Panc1 (cell line): ENCODE measurements at regions of chr1 and their contacts with region 1.

Region 1: DNA sequence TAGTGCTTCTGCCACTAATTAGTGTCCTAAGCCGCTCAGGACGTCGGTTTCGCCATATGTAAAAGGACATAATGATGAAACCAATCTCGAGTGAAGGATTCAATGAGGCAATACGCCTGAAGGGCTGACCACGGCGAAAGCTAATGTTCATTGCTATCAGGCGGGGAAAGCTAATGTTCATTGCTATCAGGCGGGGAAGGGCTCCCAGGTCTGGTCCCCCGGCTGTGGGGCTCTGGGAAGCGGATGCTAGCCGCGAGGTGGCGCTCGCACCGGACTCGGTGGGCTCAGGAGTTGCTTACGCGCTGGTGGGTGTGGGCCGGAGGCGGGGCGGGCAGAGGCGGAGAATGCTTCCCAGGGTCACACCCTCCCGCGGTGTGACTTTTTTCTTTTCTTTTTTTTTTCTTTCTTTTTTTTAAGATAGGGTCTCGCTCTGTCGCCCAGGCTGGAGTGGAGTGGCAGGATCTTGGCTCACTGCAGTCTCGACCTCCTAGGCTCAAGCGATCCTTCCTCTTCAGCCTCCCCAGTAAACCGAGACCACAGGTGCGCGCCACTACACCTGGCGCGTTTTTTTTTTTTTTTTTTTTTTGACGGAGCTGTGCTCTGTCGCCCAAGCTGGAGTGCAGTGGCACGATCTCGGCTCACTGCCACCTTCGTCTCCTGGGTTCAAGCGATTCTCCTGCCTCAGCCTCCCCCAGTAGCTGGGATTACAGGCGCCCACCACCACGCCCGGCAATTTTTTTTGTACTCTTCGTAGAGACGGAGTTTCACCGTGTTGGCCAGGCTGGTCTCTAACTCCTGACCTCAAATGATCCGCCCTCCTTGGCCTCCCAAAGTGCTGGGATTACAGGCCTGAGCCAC is 1.1 kb upstream of the PEAR1 start:
- DNase-seq: no peak
- ATAC-seq: peak; percentile 83
- H3K4me3 ChIP-seq: peak overlapping the region; percentile 31 to 62
- H3K27ac ChIP-seq: peak overlapping the region; percentile 56; the same call in 1 of the 2 replicates
- H3K4me1 ChIP-seq: peaks cover 42% of the 10 kb centered on the region
- H3K27me3 ChIP-seq: no peaks in the 10 kb centered on the region
- CTCF ChIP-seq: peak; percentile 95

Region 2: DNA sequence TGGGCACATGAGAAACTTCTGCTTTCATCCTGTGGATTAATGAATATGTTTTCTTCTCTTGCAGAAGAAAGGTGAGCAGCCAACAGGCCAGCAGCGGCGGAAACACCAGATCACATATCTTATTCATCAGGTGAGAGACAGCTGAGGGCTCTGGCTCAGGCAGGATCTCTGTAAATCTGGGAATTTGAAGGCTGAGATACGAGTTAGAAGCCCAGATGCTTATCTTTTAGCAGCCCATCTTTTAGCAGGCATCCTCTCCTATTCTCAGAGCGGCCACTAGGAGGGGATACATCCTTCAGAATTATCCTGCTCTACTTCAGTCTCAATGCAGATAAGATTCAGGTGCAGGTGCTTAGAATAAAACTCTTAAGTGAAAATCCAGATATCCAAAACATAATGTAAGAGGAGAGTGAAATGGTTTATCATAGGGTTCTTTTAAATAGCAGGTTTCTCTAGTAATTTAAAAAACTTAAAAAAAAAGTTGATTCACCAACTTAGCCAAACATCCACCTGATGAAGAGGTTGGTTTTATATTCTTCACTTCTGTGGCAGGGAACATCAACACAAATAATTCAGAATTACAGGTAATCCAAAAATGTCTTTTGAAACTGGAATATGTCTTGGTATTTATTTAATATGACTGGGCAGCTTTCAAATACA is 95.1 kb before region 1 on chr1:
- CTCF ChIA-PET with region 1: interaction called, 4 read pairs
- POLR2A ChIA-PET with region 1: no interaction called
- in situ Hi-C with region 1: no loop called
- intact Hi-C with region 1: loop called (anchors 1 kb)
- DNase-seq: peak; percentile 45
- ATAC-seq: peak; percentile 83
- H3K4me3 ChIP-seq: no peak overlapping the region
- H3K27ac ChIP-seq: no peak overlapping the region
- H3K4me1 ChIP-seq: no peaks in the 10 kb centered on the region
- H3K27me3 ChIP-seq: no peaks in the 10 kb centered on the region
- CTCF ChIP-seq: peak; percentile 86

Region 3: GRCh38 chr1:156838981-156839410 is 53.4 kb before region 1 on chr1:
- CTCF ChIA-PET with region 1: interaction called, 15 read pairs
- POLR2A ChIA-PET with region 1: interaction called, 3 read pairs
- in situ Hi-C with region 1: no loop called
- intact Hi-C with region 1: no loop called
- DNase-seq: peak; percentile 27
- ATAC-seq: peak; percentile 79
- H3K4me3 ChIP-seq: no peak overlapping the region
- H3K27ac ChIP-seq: no peak overlapping the region
- H3K4me1 ChIP-seq: no peaks in the 10 kb centered on the region
- H3K27me3 ChIP-seq: peaks cover 2% of the 10 kb centered on the region
- CTCF ChIP-seq: peak; percentile 96

Region 4: GRCh38 chr1:156920233-156921052 is 28.0 kb after region 1 on chr1 and contains the start of gene LRRC71:
- CTCF ChIA-PET with region 1: interaction called, 8 read pairs
- POLR2A ChIA-PET with region 1: no interaction called
- in situ Hi-C with region 1: no loop called
- intact Hi-C with region 1: loop called (anchors 1 kb)
- DNase-seq: no peak
- ATAC-seq: peak; percentile 98
- H3K4me3 ChIP-seq: peak within 1 kb of the TSS; percentile 28 to 47
- H3K27ac ChIP-seq: 0 out of 2 replicates have a peak within 1 kb of the TSS, but pooled peaks have one; percentile 20
- H3K4me1 ChIP-seq: peaks cover 3% of the 10 kb centered on the region; the same call in 1 of the 2 replicates
- H3K27me3 ChIP-seq: no peaks in the 10 kb centered on the region
- CTCF ChIP-seq: peak; percentile 98
- total RNA-seq, gene LRRC71: 0.77 TPM

Region 5: DNA sequence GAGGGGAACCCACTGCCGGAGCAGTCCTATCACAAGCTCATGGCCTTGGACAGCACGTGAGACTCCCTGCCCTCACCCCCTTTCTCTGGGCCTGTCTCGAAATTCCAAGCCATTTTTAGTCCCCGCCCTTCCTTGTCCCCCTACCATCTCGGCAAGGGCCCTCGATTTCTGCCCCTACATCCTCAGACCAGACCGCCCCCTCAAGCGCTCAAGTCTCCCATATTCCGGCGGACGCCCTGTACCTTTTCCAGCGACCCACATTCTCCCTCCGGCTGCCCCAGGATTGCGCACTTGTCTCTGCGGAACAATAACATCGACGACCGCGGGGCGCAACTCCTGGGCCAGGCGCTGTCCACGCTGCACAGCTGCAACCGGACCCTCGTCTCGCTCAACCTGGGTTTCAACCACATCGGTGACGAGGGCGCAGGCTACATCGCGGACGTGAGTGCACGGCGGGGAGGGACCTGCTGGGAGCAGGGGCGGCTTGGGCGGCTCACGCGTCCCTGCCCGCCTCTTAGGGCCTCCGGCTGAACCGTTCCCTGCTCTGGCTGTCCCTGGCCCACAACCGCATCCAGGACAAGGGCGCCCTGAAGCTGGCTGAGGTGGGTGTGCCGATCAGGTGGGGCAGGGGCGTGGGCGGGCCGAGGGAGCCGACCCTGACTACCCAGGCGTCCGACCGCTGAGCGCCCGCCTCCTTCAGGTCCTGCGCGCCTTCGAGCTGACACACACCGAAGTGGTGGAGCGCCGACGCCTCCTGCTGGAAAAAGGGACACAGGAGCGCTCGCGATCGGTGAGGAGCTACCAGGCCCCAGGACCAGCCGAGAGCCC is 35.0 kb after region 1 on chr1:
- CTCF ChIA-PET with region 1: interaction called, 11 read pairs
- POLR2A ChIA-PET with region 1: no interaction called
- in situ Hi-C with region 1: no loop called
- intact Hi-C with region 1: no loop called
- DNase-seq: peak; percentile 39
- ATAC-seq: peak; percentile 93
- H3K4me3 ChIP-seq: peak overlapping the region; percentile 50 to 60
- H3K27ac ChIP-seq: peak overlapping the region; percentile 44; the same call in 1 of the 2 replicates
- H3K4me1 ChIP-seq: peaks cover 3% of the 10 kb centered on the region; the same call in 1 of the 2 replicates
- H3K27me3 ChIP-seq: no peaks in the 10 kb centered on the region
- CTCF ChIP-seq: peak; percentile 97

Region 6: GRCh38 chr1:157916887-157917570 is 1024.6 kb after region 1 on chr1:
- CTCF ChIA-PET with region 1: no interaction called
- POLR2A ChIA-PET with region 1: no interaction called
- in situ Hi-C with region 1: no loop called
- intact Hi-C with region 1: no loop called
- DNase-seq: no peak
- ATAC-seq: no peak
- H3K4me3 ChIP-seq: no peak overlapping the region
- H3K27ac ChIP-seq: no peak overlapping the region
- H3K4me1 ChIP-seq: no peaks in the 10 kb centered on the region
- H3K27me3 ChIP-seq: peaks cover 4% of the 10 kb centered on the region
- CTCF ChIP-seq: no peak